Dendritic cell treated with granulocyte-macrophage colony-stimulating factor and Interleukin-4, amounts not matched to agents 40 ng/mL and 50 ng/mL, for 4 days (primary cell): ENCODE measurements at regions of chr22 and their contacts with region 1.

Region 1: DNA sequence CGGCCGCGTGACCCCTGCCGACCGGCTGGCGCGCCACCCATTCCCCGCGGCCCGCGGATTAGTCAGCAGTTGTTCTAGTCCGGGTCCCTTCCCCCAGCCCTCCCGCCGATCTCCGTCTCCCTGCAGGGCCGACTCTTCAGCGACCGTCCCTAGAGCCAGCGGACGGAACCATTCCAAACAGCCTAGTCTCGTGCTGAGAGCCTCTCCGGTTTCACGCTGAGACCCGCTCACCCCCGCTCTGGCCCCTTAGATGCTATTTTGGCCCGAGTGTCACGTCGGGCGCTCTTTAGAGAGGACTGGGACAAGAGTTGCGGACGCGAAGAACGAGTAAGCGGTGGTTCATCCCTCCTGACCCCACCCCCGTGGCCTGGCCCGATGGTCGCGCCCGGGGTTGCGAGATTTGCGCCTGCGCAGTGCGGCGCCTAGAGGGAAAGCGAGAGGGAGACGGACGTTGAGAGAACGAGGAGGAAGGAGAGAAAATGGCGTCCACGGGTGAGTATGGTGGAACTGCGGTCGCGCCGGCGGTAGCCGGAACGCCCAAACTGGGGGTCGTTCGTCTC is at the starts of genes EWSR1 and RHBDD3:
- H3K4me3 Mint-ChIP-seq: peak within 1 kb of the TSS; percentile 87
- H3K27ac Mint-ChIP-seq: peak within 1 kb of the TSS; percentile 100
- H3K4me1 Mint-ChIP-seq: peaks cover 47% of the 10 kb centered on the region
- H3K27me3 Mint-ChIP-seq: no peaks in the 10 kb centered on the region

Region 2: GRCh38 chr22:29302681-29303465 is 34.9 kb after region 1 on chr22:
- intact Hi-C with region 1: loop called (anchors 2 kb)
- H3K4me3 Mint-ChIP-seq: no peak overlapping the region
- H3K27ac Mint-ChIP-seq: peak overlapping the region; percentile 82
- H3K4me1 Mint-ChIP-seq: peaks cover 72% of the 10 kb centered on the region
- H3K27me3 Mint-ChIP-seq: peaks cover 12% of the 10 kb centered on the region

Region 3: DNA sequence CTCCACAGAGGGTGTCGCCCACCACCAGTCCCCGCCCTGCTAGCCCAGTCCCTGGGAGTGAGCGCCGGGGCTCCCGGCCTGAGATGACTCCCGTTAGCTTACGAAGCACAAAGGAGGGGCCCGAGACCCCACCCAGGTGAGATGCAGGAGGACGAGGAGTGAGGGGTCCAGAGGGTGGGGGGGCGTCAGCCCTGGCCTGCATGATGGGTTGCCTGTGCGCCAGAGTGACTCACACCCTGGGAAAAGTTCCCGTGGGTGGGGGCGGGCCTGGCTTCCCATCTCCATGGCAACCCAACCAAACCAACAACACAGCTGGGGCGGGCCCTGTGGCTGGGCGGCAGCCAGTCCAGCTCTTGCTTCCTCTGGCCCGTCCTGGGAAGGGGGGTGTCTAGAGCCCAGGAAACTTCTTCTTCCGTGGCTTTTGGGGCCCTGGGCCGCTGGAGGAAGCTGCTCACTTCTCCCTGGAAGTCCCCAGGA is 43.0 kb after region 1 on chr22:
- intact Hi-C with region 1: loop called (anchors 2 kb)
- H3K4me3 Mint-ChIP-seq: peak overlapping the region; percentile 26
- H3K27ac Mint-ChIP-seq: peak overlapping the region; percentile 82
- H3K4me1 Mint-ChIP-seq: peaks cover 81% of the 10 kb centered on the region
- H3K27me3 Mint-ChIP-seq: peaks cover 27% of the 10 kb centered on the region